ENCODE measurements at regions of chr3 and their contacts with region 1.

Region 1: GRCh38 chr3:108589146-108589997 is at the starts of genes CIP2A and DZIP3:
- DNase-seq: peak; percentile 84
- H3K4me3 Mint-ChIP-seq: peak within 1 kb of the TSS; percentile 95
- H3K27ac Mint-ChIP-seq: peak within 1 kb of the TSS; percentile 99
- H3K4me1 Mint-ChIP-seq: peaks cover 36% of the 10 kb centered on the region
- H3K27me3 Mint-ChIP-seq: no peaks in the 10 kb centered on the region
- total RNA-seq, gene CIP2A: 34.7 to 39.9 TPM
- total RNA-seq, gene DZIP3: 11.2 to 12.2 TPM

Region 2: GRCh38 chr3:107522510-107523288 is 1066.7 kb before region 1 on chr3 and contains the start of gene BBX:
- CTCF ChIA-PET with region 1: no interaction called
- intact Hi-C with region 1: loop called (anchors 2 kb)
- DNase-seq: peak; percentile 94
- H3K4me3 Mint-ChIP-seq: peak within 1 kb of the TSS; percentile 92
- H3K27ac Mint-ChIP-seq: peak within 1 kb of the TSS; percentile 94
- H3K4me1 Mint-ChIP-seq: peaks cover 23% of the 10 kb centered on the region
- H3K27me3 Mint-ChIP-seq: no peaks in the 10 kb centered on the region
- total RNA-seq, gene BBX: 43.1 to 48.6 TPM

Region 3: GRCh38 chr3:108552267-108553159 is 36.9 kb before region 1 on chr3:
- CTCF ChIA-PET with region 1: interaction called, 4 read pairs
- intact Hi-C with region 1: loop called (anchors 2 kb)
- DNase-seq: no peak
- H3K4me3 Mint-ChIP-seq: no peak overlapping the region
- H3K27ac Mint-ChIP-seq: no peak overlapping the region
- H3K4me1 Mint-ChIP-seq: peaks cover 2% of the 10 kb centered on the region
- H3K27me3 Mint-ChIP-seq: no peaks in the 10 kb centered on the region

Region 4: DNA sequence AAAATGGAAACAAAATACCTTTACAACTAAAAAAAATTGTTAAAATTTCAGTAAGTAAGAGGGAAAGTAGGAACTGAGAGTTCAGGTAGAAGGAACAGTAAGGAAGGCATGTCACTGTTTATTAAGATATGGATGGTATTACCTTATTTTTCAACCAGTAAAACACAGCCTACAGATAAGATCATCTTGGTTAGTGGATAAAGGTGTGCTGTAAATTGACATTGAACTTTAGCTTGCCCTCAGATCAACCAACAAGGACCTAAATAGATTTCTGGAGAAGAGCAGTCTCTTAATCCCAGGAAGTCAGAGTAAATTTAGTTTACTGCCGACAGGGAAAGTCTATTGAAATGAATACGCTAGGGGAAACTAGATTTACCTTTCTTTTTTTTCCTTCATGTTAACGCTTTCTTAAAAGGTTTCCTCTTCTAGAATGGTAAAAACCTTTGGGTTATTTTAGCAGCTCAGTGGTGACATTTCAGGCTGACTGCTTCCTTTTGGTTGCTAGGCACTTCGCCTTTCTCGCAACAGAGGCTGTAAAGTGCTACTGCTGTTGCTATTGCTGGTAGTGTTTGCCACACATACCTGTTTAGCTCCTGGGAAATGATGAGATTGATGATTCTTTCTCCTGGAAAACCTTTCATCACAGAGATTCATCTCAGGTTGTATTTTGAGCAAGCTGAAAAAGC is 13.0 kb after region 1 on chr3:
- CTCF ChIA-PET with region 1: interaction called, 28 read pairs
- intact Hi-C with region 1: loop called (anchors 1 kb)
- DNase-seq: peak; percentile 72
- H3K4me3 Mint-ChIP-seq: peak overlapping the region; percentile 26
- H3K27ac Mint-ChIP-seq: peak overlapping the region; percentile 62
- H3K4me1 Mint-ChIP-seq: peaks cover 52% of the 10 kb centered on the region
- H3K27me3 Mint-ChIP-seq: no peaks in the 10 kb centered on the region

Region 5: GRCh38 chr3:108862865-108863798 is 273.8 kb after region 1 on chr3:
- CTCF ChIA-PET with region 1: no interaction called
- intact Hi-C with region 1: loop called (anchors 1 kb)
- DNase-seq: peak; percentile 79
- H3K4me3 Mint-ChIP-seq: peak overlapping the region; percentile 63
- H3K27ac Mint-ChIP-seq: peak overlapping the region; percentile 100
- H3K4me1 Mint-ChIP-seq: peaks cover 51% of the 10 kb centered on the region
- H3K27me3 Mint-ChIP-seq: no peaks in the 10 kb centered on the region

Region 6: GRCh38 chr3:108970561-108970960 is 381.2 kb after region 1 on chr3:
- CTCF ChIA-PET with region 1: no interaction called
- intact Hi-C with region 1: no loop called
- DNase-seq: no peak
- H3K4me3 Mint-ChIP-seq: no peak overlapping the region
- H3K27ac Mint-ChIP-seq: no peak overlapping the region
- H3K4me1 Mint-ChIP-seq: peaks cover 3% of the 10 kb centered on the region
- H3K27me3 Mint-ChIP-seq: peaks cover 2% of the 10 kb centered on the region